ENCODE measurements at regions of chr1 and their contacts with region 1.

Region 1: GRCh38 chr1:27102707-27103491 is 52.0 kb downstream of the SLC9A1 start:
- DNase-seq: peak; percentile 67 to 68
- H3K4me3 ChIP-seq: no peak overlapping the region
- H3K27ac ChIP-seq: no peak overlapping the region
- H3K4me1 ChIP-seq: peaks cover 5 to 21% of the 10 kb centered on the region in 2 donors
- H3K27me3 ChIP-seq: no peaks in the 10 kb centered on the region
- CTCF ChIP-seq: peak; percentile 92 to 98 (median 96)
- POLR2A ChIP-seq: no peak

Region 2: DNA sequence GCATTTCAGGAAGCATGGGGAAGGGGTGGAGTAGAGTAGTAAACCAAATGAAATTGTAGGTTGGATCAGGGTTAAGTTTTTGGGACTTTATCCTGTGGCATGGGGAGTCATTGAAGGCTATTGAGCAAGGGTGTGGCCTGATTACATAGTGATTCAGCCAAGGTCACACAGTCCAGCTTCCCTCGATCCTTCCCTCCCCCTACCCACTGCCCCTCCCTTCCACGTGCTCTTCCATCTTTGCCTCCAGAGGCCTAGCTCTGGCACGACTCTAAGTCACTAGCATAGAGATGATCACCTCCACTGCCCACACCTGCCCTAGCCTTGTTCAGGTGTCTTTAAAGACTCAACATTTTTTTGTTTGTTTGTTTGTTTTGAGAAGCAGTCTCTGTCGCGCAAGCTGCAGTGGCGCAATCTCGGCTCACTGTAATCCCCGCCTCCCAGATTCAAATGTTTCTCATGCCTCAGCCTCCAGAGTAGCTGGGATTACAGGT is 89.2 kb after region 1 on chr1:
- intact Hi-C with region 1: loop called (anchors 2 kb)
- DNase-seq: no peak
- H3K4me3 ChIP-seq: no peak overlapping the region
- H3K27ac ChIP-seq: no peak overlapping the region
- H3K4me1 ChIP-seq: no peaks in the 10 kb centered on the region
- H3K27me3 ChIP-seq: no peaks in the 10 kb centered on the region
- CTCF ChIP-seq: no peak
- POLR2A ChIP-seq: no peak

Region 3: GRCh38 chr1:27284425-27285273 is 181.8 kb after region 1 on chr1:
- intact Hi-C with region 1: loop called (anchors 2 kb)
- DNase-seq: peak; percentile 81 to 86
- H3K4me3 ChIP-seq: no peak overlapping the region
- H3K27ac ChIP-seq: no peak overlapping the region
- H3K4me1 ChIP-seq: no peaks in the 10 kb centered on the region
- H3K27me3 ChIP-seq: no peaks in the 10 kb centered on the region
- CTCF ChIP-seq: peak; percentile 63 to 77 (median 68)
- POLR2A ChIP-seq: no peak

Measured in thyroid gland (tissue), 4 donors.